ENCODE measurements at regions of chr17 and their contacts with region 1.

Region 1: DNA sequence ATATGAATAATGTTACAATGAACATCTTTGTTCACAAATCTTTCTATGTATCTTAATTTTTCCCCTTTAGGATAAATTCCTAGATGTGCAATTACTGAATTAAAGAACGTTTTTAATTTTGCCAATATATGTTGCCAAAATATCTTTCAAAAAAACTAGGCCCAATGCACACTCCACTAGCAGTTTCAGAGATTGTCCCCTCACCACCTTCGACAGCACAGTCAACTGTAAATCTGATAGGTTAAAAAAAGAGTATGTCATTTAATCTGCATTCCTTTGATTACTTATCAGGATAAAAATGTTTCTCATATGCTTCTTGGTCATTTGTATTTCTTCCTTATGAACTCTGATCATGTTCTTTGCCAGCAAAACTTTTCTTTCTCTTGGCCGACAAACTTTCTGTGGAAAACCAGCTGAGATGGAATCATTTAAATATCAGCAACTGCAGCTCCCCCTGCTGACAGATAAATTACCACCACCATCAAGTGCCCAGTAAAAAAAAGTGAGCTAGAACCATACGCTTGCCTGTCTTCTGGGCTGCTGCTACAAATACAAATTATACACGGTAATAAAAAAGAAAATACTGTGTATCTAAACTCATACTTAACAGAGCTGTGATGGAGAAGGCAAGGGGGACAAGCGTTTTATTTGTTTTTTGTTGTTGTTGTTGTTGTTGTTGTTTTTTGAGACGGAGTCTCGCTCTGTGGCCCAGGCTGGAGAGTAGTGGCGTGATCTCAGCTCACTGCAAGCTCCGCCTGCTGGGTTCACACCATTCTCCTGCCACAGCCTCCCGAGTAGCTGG is 19.6 kb upstream of the KANSL1 start:
- DNase-seq: peak; percentile 78
- H3K4me3 ChIP-seq: no peak overlapping the region
- H3K27ac ChIP-seq: no peak overlapping the region
- H3K4me1 ChIP-seq: no peaks in the 10 kb centered on the region
- CTCF ChIP-seq: peak; percentile 99

Region 2: DNA sequence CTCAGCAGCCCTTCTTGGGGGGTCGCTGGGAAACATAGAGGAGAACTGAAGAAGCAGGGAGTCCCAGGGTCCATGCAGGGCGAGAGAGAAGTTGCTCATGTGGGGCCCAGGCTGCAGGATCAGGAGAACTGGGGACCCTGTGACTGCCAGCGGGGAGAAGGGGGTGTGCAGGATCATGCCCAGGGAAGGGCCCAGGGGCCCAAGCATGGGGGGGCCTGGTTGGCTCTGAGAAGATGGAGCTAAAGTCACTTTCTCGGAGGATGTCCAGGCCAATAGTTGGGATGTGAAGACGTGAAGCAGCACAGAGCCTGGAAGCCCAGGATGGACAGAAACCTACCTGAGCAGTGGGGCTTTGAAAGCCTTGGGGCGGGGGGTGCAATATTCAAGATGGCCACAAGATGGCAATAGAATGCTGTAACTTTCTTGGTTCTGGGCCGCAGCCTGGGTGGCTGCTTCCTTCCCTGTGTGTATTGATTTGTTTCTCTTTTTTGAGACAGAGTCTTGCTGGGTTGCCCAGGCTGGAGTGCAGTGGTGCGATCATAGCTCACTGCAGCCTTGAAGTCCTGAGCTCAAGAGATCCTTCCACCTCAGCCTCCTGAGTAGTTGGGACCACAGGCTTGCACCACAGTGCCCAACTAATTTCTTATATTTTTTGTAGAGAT is 210.4 kb before region 1 on chr17:
- CTCF ChIA-PET with region 1: no interaction called
- POLR2A ChIA-PET with region 1: interaction called, 4 read pairs
- intact Hi-C with region 1: loop called (anchors 2 kb)
- DNase-seq: peak; percentile 73
- H3K4me3 ChIP-seq: no peak overlapping the region
- H3K27ac ChIP-seq: no peak overlapping the region
- H3K4me1 ChIP-seq: no peaks in the 10 kb centered on the region
- CTCF ChIP-seq: peak; percentile 86

Region 3: DNA sequence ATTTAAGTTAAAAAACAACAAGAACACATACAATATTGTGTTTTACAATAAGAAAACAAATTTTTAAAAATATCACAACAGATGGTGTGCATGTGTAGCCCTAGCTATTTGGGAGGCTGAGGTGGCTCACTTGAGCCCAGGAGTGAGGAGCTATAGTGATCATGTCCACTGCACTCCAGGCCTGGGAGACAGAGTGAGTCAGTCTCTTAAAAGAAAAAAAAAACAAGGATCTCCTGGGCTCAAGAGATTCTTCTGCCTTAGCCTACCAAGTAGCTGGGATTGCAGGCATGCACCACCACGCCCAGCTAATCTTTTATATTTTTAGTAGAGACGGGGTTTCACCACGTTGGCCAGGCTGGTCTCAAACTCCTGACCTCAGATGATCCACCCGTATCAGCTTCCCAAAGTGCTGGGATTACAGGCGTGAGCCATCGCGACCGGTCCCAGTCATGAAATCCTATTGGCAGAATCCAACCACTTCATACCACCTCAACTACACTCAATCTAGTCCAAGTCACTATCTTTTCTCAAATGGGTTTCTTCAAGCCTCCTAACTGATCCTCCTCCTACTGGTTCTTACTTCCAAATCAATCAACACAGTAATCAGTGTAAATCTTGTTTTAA is 158.8 kb before region 1 on chr17:
- CTCF ChIA-PET with region 1: no interaction called
- POLR2A ChIA-PET with region 1: no interaction called
- intact Hi-C with region 1: loop called (anchors 5 kb)
- DNase-seq: no peak
- H3K4me3 ChIP-seq: no peak overlapping the region
- H3K27ac ChIP-seq: no peak overlapping the region
- H3K4me1 ChIP-seq: no peaks in the 10 kb centered on the region
- CTCF ChIP-seq: no peak

Measured in OCI-LY7 (cell line).